Endothelial cell of umbilical vein (primary cell): ENCODE measurements at regions of chr12 and their contacts with region 1.

Region 1: DNA sequence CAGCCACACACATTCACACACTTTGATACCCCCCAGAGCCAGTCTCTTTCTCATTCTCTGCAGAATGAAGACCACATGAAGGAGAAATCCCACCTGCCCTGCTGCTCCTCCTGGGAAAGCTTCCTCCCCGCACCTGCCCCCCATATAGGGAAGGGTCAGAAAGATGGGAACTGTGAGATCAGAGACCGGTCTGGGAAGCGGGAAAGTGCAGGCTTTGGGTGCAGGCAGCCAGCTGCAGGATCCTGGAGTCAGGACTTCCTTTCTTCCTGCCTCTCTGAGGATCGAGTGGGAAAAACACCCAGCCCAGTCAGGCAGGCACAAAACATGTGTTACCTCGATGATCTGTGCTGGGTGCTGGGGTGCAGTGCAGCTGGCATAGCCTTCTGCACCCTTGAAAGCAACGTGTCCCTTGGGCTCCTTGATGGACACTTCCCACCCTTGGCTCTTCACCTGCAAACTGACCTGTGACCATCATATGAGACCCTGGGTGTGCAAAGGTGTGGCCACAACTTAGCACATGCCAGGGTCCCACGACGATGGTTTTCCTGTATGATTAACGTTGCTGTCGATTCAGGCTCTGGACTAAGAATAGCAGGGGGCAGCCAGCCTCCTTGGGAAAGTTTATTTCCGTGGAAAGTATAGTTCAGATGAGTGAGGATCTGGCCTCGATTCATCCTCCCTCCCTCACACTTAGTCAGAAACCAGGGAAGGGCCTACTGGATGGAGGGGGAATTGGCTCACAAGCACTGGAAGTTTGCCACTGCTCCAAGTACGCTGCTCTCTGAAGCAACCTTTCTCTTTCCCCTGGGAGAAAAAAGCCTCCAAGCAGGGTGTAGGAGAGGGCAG is 105.4 kb upstream of the MED13L start:
- DNase-seq: peak; percentile 94
- H3K4me3 ChIP-seq: no peak overlapping the region
- H3K27ac ChIP-seq: peak overlapping the region; percentile 83
- H3K4me1 ChIP-seq: peaks cover 31% of the 10 kb centered on the region
- H3K27me3 ChIP-seq: no peaks in the 10 kb centered on the region
- CTCF ChIP-seq: peak in 1 of 2 donors; percentile 21
- POLR2A ChIP-seq: no peak

Region 2: GRCh38 chr12:115998119-115998633 is 384.7 kb before region 1 on chr12:
- CTCF ChIA-PET with region 1: no interaction called
- POLR2A ChIA-PET with region 1: no interaction called
- dilution Hi-C with region 1: no loop called
- intact Hi-C with region 1: loop called (anchors 2 kb)
- DNase-seq: peak; percentile 70
- H3K4me3 ChIP-seq: no peak overlapping the region
- H3K27ac ChIP-seq: peak overlapping the region; percentile 34
- H3K4me1 ChIP-seq: no peaks in the 10 kb centered on the region
- H3K27me3 ChIP-seq: no peaks in the 10 kb centered on the region
- CTCF ChIP-seq: peak; percentile 47 to 52
- POLR2A ChIP-seq: no peak

Region 3: DNA sequence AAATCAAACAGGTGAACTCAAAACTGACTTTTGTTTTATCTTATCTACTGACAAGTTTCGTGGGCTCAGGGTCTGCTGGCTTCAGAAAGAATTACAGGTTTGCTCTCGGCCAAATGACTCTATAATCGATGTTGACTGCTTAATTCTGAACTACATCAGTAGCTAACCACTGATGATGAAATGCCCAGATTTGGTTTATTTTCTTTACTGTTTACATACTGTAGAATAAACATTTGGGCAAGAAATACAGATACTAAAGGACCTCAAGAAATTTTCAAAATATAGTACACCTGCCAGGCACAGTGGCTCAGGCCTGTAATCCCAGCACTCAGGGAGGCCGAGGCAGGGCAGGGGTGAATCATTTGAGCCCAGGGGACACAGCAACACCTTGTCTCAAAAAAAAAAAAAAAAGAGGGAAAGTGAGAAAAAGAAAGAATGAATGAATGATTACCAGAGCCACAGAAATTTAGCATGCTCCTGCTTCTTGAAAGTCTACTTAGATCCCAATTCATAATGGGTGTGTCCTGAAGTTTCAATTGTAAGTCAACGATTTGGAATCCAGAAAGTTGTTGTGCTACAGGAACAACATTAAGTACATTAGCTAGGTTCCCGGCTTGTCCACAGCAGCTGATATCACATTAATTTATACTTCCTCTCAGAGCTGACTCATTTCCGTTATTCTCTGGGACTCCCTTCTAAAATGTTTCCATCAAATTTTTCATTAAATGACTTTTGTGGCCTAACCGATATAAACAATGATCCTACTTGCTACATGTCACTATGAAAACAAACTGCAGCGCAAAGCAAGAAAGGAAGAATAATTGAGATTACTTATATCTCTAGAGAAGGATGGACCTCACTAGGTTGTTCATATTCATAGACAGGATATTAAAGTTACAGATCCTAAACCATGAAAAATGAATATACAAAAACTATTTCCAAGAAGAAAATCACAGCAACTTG is 239.7 kb before region 1 on chr12:
- CTCF ChIA-PET with region 1: no interaction called
- POLR2A ChIA-PET with region 1: no interaction called
- dilution Hi-C with region 1: no loop called
- intact Hi-C with region 1: loop called (anchors 5 kb)
- DNase-seq: peak; percentile 97
- H3K4me3 ChIP-seq: peak overlapping the region in 1 of 3 experiments; percentile 18
- H3K27ac ChIP-seq: peak overlapping the region; percentile 99
- H3K4me1 ChIP-seq: peaks cover 28% of the 10 kb centered on the region
- H3K27me3 ChIP-seq: no peaks in the 10 kb centered on the region
- CTCF ChIP-seq: no peak
- POLR2A ChIP-seq: peak; percentile 25

Region 4: GRCh38 chr12:116358893-116359761 is 23.8 kb before region 1 on chr12:
- CTCF ChIA-PET with region 1: interaction called, 15 read pairs
- POLR2A ChIA-PET with region 1: interaction called, 11 read pairs
- dilution Hi-C with region 1: no loop called
- intact Hi-C with region 1: loop called (anchors 1 kb)
- DNase-seq: peak; percentile 99
- H3K4me3 ChIP-seq: no peak overlapping the region
- H3K27ac ChIP-seq: peak overlapping the region; percentile 68
- H3K4me1 ChIP-seq: peaks cover 18% of the 10 kb centered on the region
- H3K27me3 ChIP-seq: no peaks in the 10 kb centered on the region
- CTCF ChIP-seq: no peak
- POLR2A ChIP-seq: peak; percentile 47

Region 5: GRCh38 chr12:116525418-116526001 is 142.6 kb after region 1 on chr12:
- CTCF ChIA-PET with region 1: no interaction called
- POLR2A ChIA-PET with region 1: no interaction called
- dilution Hi-C with region 1: no loop called
- intact Hi-C with region 1: loop called (anchors 2 kb)
- DNase-seq: peak; percentile 74
- H3K4me3 ChIP-seq: no peak overlapping the region
- H3K27ac ChIP-seq: peak overlapping the region; percentile 68
- H3K4me1 ChIP-seq: peaks cover 22% of the 10 kb centered on the region
- H3K27me3 ChIP-seq: no peaks in the 10 kb centered on the region
- CTCF ChIP-seq: no peak
- POLR2A ChIP-seq: no peak